ENCODE measurements at regions of chr11 and their contacts with region 1.

Region 1: DNA sequence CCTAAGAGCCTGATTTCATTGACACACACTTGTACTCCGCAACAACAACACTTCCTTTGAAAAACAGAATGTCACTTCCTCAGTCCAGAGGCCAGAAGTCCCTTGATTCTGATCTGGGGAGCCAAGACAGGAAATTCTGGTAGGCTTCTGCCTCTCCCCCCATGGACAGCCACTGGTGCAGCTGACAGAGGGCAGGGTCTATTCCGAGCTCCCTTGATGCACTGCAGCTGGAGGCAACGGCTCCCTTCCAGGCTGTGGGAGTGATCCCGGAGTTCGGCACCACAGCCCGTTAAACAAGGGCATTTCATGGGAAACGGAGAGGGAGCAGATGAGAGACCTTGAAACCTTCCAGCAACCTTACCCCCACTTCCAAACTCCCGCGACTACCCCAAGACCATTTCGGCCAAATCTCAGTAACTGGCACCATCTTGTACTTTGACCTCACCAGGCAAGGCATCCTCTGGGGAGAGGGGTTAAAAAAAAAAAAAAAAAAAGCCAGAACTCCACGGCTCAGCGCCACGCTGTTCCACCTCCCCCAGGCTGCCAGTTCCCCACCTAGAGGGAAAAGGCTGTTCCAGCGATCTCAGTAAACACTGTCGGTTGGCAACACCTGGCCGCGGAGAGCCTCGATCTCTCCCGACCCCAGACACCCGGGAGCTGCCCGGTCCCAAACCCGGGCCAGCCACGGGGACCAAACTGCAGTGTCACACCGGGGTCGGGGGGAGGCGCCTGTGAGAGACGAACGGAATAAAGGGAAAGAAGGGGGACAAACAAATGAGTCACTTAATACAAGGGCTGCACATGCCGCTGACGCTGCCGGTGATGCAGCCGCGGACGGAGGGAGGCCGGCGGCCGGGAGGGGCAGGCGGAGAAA is 1.1 kb downstream of the GAB2 start:
- DNase-seq: peak; percentile 50
- H3K4me3 ChIP-seq: peak overlapping the region; percentile 56 to 77
- H3K27ac ChIP-seq: peak overlapping the region; percentile 85 to 87
- H3K4me1 ChIP-seq: no peaks in the 10 kb centered on the region
- H3K27me3 ChIP-seq: no peaks in the 10 kb centered on the region
- CTCF ChIP-seq: peak in 2 of 4 experiments; percentile 39 to 54
- POLR2A ChIP-seq: peak; percentile 64

Region 2: GRCh38 chr11:78039919-78040671 is 376.4 kb before region 1 on chr11:
- intact Hi-C with region 1: no loop called
- DNase-seq: peak; percentile 8
- H3K4me3 ChIP-seq: no peak overlapping the region
- H3K27ac ChIP-seq: peak overlapping the region in 1 of 2 donors; percentile 3
- H3K4me1 ChIP-seq: no peaks in the 10 kb centered on the region
- H3K27me3 ChIP-seq: no peaks in the 10 kb centered on the region
- CTCF ChIP-seq: no peak
- POLR2A ChIP-seq: no peak

Region 3: DNA sequence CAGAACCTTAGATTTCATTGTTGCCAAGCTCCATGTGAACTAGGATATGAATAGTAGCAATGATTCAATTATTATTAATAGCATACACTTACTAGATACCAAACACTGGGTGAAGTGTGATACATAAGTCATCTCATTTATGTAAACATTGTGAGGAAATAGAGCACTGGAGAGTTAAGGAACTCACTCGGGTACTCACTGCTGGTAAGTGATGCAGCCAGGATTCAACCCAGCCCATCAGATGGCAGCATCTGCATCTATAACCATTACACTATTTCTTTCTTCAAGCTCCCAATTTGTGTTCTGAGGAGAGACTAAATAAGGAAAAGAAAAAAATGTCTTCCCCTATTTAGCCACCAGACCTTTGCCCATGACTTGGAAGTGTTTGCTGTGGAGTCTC is 266.9 kb before region 1 on chr11:
- intact Hi-C with region 1: loop called (anchors 5 kb)
- DNase-seq: no peak
- H3K4me3 ChIP-seq: no peak overlapping the region
- H3K27ac ChIP-seq: no peak overlapping the region
- H3K4me1 ChIP-seq: no peaks in the 10 kb centered on the region
- H3K27me3 ChIP-seq: no peaks in the 10 kb centered on the region
- CTCF ChIP-seq: peak in 1 of 4 experiments; percentile 17
- POLR2A ChIP-seq: no peak

Region 4: GRCh38 chr11:78228467-78228866 is 188.1 kb before region 1 on chr11:
- intact Hi-C with region 1: loop called (anchors 2 kb)
- DNase-seq: no peak
- H3K4me3 ChIP-seq: no peak overlapping the region
- H3K27ac ChIP-seq: no peak overlapping the region
- H3K4me1 ChIP-seq: no peaks in the 10 kb centered on the region
- H3K27me3 ChIP-seq: no peaks in the 10 kb centered on the region
- CTCF ChIP-seq: peak in 2 of 4 experiments; percentile 50 to 52
- POLR2A ChIP-seq: no peak

Region 5: DNA sequence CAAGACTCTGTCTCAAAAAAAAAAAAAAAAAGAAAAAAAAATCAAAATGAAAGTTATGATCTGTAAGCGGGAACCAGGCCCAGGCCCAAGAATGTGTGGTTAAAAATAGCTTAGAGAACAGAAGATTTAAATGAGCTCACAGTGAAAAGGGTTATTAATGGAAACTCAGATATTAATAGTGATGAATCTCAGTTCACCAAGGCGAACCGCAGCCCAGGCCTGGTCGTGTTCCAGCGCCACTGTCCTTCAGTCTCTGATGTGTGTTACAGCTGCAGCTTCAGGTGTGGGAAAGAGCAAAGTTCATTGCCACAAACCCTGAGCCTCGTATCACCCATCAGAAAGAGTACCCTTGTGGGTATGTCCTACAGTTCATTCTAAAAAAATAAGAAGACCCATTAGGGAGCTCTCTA is 106.0 kb before region 1 on chr11:
- intact Hi-C with region 1: loop called (anchors 10 kb)
- DNase-seq: no peak
- H3K4me3 ChIP-seq: no peak overlapping the region
- H3K27ac ChIP-seq: no peak overlapping the region
- H3K4me1 ChIP-seq: no peaks in the 10 kb centered on the region
- H3K27me3 ChIP-seq: no peaks in the 10 kb centered on the region
- CTCF ChIP-seq: no peak
- POLR2A ChIP-seq: no peak

Region 6: DNA sequence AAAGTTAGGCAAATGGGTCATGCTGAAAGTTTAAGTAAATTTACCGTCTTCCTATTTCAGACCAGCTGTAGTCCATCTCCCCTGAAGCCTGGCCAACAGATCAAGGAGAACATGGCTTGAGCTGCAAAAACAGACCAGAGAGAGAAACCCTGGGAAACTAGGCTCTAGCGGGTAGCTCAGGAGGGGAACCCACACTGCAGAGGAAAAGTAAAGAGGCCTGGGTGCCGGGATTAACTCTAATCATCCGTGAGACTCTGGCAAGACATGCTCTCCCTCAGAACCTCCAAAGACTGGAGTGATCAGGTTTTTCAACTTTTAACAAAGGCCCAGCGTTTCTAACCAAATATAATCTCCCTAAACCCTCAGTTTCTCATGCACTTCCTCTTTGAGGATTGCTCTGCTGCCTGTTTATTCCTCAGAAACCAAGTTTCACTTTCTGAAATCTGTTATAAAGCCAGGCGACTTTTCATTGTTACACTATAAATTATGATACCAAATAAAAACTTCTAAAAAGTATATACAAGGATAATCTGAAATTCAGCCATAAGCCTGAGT is 66.4 kb before region 1 on chr11:
- intact Hi-C with region 1: no loop called
- DNase-seq: no peak
- H3K4me3 ChIP-seq: no peak overlapping the region
- H3K27ac ChIP-seq: peak overlapping the region; percentile 23 to 55
- H3K4me1 ChIP-seq: no peaks in the 10 kb centered on the region
- H3K27me3 ChIP-seq: no peaks in the 10 kb centered on the region
- CTCF ChIP-seq: no peak
- POLR2A ChIP-seq: no peak

Region 7: GRCh38 chr11:78476066-78476465 is 59.5 kb after region 1 on chr11:
- intact Hi-C with region 1: no loop called
- DNase-seq: no peak
- H3K4me3 ChIP-seq: no peak overlapping the region
- H3K27ac ChIP-seq: no peak overlapping the region
- H3K4me1 ChIP-seq: no peaks in the 10 kb centered on the region
- H3K27me3 ChIP-seq: no peaks in the 10 kb centered on the region
- CTCF ChIP-seq: no peak
- POLR2A ChIP-seq: no peak

Region 8: DNA sequence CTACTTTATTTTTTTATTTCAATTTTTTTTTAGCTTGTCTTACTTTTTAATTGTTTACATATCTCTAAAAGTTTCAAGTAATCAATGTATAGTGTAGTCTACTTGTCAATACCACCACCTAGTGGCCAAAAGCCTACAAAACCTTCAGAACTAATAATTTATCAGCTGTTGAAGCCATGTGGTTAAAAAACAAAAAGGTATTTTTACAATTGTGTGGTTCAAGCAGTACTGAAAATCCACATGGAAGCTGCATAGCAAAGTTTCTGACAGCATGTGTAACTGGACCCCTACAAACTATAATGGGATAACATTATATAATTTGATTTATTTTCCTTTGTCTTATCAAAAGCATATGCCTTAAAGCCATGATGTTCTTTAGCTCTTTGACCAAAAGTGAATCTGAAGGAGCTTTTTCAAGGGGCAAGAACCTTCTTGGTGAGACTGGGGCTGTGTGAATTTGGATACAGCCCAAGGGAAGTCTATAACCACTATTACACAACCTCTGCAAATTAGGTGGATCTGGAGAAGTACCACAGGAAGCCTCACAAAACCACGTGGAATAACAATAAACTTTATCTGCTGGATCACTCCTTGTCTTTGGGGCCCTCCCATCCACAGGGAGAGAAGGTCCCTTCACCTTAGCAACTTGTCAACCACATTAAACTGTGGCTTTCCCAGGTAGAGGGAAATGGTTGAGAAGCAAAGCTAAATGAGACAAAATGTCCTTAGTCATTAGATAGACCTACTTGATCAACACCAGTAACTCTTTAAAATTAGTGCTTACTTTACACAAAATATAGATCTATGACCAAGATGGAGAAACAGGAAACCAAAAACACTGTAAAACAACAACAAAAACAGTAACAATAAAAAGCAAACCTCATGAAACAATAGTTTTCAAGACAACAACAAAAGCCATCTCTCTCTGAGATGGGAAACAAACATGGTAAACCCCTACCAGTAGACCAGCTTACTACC is 148.2 kb after region 1 on chr11:
- intact Hi-C with region 1: loop called (anchors 5 kb)
- DNase-seq: peak; percentile 68
- H3K4me3 ChIP-seq: no peak overlapping the region
- H3K27ac ChIP-seq: no peak overlapping the region
- H3K4me1 ChIP-seq: peaks cover 6% of the 10 kb centered on the region
- H3K27me3 ChIP-seq: no peaks in the 10 kb centered on the region
- CTCF ChIP-seq: peak; percentile 63 to 84 (median 78)
- POLR2A ChIP-seq: no peak

Region 9: GRCh38 chr11:78731027-78731426 is 314.5 kb after region 1 on chr11:
- intact Hi-C with region 1: no loop called
- DNase-seq: no peak
- H3K4me3 ChIP-seq: no peak overlapping the region
- H3K27ac ChIP-seq: no peak overlapping the region
- H3K4me1 ChIP-seq: no peaks in the 10 kb centered on the region
- H3K27me3 ChIP-seq: no peaks in the 10 kb centered on the region
- CTCF ChIP-seq: no peak
- POLR2A ChIP-seq: no peak

Measured in prostate gland (tissue), 2 donors.